ENCODE measurements at regions of chr2 and their contacts with region 1.

Region 1: GRCh38 chr2:129914538-129915302 is 64.7 kb upstream of the RAB6C start:
- DNase-seq: no peak

Region 2: GRCh38 chr2:129548880-129549279 is 365.8 kb before region 1 on chr2:
- intact Hi-C with region 1: loop called in 1 of 2 experiments (anchors 10 kb)
- DNase-seq: no peak

Measured in posterior vena cava (tissue), 2 donors.